ENCODE measurements at regions of chr7 and their contacts with region 1.

Region 1: GRCh38 chr7:94449148-94449725 is 54.5 kb downstream of the COL1A2 start:
- DNase-seq: peak; percentile 58
- ATAC-seq: peak; percentile 48
- H3K4me3 ChIP-seq: no peak overlapping the region
- H3K27ac ChIP-seq: no peak overlapping the region
- H3K4me1 ChIP-seq: peaks cover 4% of the 10 kb centered on the region; the same call in 1 of the 2 replicates
- H3K27me3 ChIP-seq: no peaks in the 10 kb centered on the region
- CTCF ChIP-seq: peak; percentile 76

Region 2: GRCh38 chr7:93430917-93431588 is 1018.2 kb before region 1 on chr7:
- CTCF ChIA-PET with region 1: no interaction called
- POLR2A ChIA-PET with region 1: no interaction called
- intact Hi-C with region 1: no loop called
- DNase-seq: no peak
- ATAC-seq: no peak
- H3K4me3 ChIP-seq: no peak overlapping the region
- H3K27ac ChIP-seq: no peak overlapping the region
- H3K4me1 ChIP-seq: 0 out of 2 replicates have a peak, but pooled peaks cover 2% of the 10 kb centered on the region
- H3K27me3 ChIP-seq: peaks cover 52% of the 10 kb centered on the region
- CTCF ChIP-seq: no peak

Region 3: GRCh38 chr7:94410413-94411187 is 38.6 kb before region 1 on chr7:
- CTCF ChIA-PET with region 1: no interaction called
- POLR2A ChIA-PET with region 1: no interaction called
- intact Hi-C with region 1: no loop called
- DNase-seq: no peak
- ATAC-seq: no peak
- H3K4me3 ChIP-seq: no peak overlapping the region
- H3K27ac ChIP-seq: no peak overlapping the region
- H3K4me1 ChIP-seq: no peaks in the 10 kb centered on the region
- H3K27me3 ChIP-seq: no peaks in the 10 kb centered on the region
- CTCF ChIP-seq: no peak

Region 4: DNA sequence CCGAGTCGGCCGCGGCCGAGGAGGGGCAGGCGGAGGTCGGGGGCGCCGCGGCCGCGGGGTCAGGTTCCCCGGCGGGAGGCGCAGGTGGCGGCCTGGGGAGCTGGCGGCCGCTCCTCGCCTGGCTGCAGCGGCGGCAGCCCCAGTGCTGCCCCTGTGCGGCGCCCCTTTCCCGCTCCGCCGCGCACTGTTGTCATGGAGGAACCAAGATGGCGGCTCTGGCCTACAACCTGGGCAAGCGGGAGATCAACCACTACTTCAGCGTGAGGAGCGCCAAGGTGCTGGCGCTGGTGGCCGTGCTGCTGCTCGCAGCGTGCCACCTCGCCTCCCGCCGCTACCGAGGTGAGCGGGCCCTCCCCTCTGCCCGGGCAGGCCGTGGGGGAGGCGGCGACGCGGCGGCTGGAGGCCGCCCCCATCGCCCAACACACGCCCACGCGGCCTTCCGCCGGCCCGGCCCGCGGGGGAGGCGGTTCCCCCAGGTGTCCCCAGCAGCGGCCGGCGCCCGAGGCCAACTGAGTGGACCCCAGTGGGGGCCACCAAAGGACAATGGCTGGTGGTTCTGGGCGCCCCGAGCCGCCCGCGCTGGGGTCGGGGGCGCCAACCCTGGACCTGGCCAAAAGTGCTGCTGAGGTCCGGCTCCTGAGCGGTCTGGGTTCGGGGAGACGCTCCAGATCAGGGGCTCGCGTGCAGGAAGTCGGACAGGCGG is 60.8 kb after region 1 on chr7:
- CTCF ChIA-PET with region 1: no interaction called
- POLR2A ChIA-PET with region 1: no interaction called
- intact Hi-C with region 1: loop called (anchors 2 kb)
- DNase-seq: peak; percentile 54
- ATAC-seq: peak; percentile 72
- H3K4me3 ChIP-seq: peak overlapping the region; percentile 88
- H3K27ac ChIP-seq: peak overlapping the region; percentile 80
- H3K4me1 ChIP-seq: peaks cover 32% of the 10 kb centered on the region
- H3K27me3 ChIP-seq: no peaks in the 10 kb centered on the region
- CTCF ChIP-seq: no peak

Region 5: DNA sequence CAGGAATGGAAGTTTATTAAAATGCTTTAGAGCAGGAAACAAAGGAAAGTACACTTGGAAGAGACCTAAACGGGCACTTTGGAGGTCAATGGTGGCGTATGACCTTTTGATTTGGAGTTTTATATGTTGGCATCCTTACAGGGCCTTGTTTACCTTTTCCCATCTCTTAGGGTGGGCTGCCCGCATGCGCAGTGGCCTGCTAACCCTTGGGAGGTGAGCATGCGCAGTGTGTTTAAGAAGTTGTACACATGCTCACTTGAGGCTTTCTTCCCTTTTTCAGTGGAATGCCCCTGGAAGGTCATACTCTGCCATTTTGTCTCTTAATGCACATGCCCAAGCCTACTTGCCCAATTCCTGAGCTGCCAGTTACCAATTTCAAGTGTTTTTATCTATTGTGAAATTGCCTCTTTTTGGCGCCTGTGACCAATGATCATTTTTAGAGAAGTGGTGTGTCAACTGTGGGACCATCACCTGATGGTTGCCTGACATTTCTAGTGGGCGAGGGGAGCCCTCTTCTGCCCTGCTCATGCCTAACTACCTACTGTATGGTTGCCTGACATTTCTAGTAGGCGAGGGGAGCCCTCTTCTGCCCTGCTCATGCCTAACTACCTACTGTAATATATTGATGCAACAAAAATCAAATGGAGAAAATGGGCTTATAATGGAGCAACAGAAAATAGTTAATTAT is 596.1 kb after region 1 on chr7:
- CTCF ChIA-PET with region 1: no interaction called
- POLR2A ChIA-PET with region 1: no interaction called
- intact Hi-C with region 1: loop called (anchors 1 kb)
- DNase-seq: peak; percentile 66
- ATAC-seq: peak; percentile 99
- H3K4me3 ChIP-seq: no peak overlapping the region
- H3K27ac ChIP-seq: no peak overlapping the region
- H3K4me1 ChIP-seq: no peaks in the 10 kb centered on the region
- H3K27me3 ChIP-seq: no peaks in the 10 kb centered on the region
- CTCF ChIP-seq: peak; percentile 74

Measured in PC-3 (cell line).